Endothelial cell of umbilical vein (primary cell): ENCODE measurements at regions of chr7 and their contacts with region 1.

Region 1: DNA sequence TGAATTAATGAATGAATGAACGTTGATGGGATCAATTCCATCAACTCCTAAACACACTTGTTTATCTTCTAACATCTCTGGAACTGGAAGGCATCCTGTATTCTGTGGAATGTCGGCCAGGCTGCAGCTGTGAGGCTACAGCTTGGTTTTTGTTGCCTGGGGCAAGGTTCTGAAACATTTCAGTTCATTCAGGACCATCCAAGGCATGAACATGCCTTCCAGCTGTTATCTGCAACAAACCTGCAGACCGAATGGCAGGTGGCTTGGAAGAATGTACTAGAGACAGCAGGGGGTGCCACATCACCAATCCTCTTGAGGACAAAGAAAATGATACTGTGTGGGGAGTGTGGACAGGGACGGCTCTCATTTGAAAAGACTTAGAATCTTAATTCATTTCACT is 12.5 kb downstream of the PAPOLB start:
- DNase-seq: peak; percentile 36
- H3K4me3 ChIP-seq: no peak overlapping the region
- H3K27ac ChIP-seq: no peak overlapping the region
- H3K4me1 ChIP-seq: peaks cover 2% of the 10 kb centered on the region
- H3K27me3 ChIP-seq: peaks cover 0 to 3% of the 10 kb centered on the region in 2 experiments
- CTCF ChIP-seq: peak; percentile 23 to 39
- POLR2A ChIP-seq: no peak

Region 2: GRCh38 chr7:4416396-4417056 is 432.8 kb before region 1 on chr7:
- CTCF ChIA-PET with region 1: no interaction called
- POLR2A ChIA-PET with region 1: no interaction called
- dilution Hi-C with region 1: no loop called
- intact Hi-C with region 1: no loop called
- DNase-seq: no peak
- H3K4me3 ChIP-seq: no peak overlapping the region
- H3K27ac ChIP-seq: no peak overlapping the region
- H3K4me1 ChIP-seq: no peaks in the 10 kb centered on the region
- H3K27me3 ChIP-seq: no peaks in the 10 kb centered on the region
- CTCF ChIP-seq: no peak
- POLR2A ChIP-seq: no peak

Region 3: DNA sequence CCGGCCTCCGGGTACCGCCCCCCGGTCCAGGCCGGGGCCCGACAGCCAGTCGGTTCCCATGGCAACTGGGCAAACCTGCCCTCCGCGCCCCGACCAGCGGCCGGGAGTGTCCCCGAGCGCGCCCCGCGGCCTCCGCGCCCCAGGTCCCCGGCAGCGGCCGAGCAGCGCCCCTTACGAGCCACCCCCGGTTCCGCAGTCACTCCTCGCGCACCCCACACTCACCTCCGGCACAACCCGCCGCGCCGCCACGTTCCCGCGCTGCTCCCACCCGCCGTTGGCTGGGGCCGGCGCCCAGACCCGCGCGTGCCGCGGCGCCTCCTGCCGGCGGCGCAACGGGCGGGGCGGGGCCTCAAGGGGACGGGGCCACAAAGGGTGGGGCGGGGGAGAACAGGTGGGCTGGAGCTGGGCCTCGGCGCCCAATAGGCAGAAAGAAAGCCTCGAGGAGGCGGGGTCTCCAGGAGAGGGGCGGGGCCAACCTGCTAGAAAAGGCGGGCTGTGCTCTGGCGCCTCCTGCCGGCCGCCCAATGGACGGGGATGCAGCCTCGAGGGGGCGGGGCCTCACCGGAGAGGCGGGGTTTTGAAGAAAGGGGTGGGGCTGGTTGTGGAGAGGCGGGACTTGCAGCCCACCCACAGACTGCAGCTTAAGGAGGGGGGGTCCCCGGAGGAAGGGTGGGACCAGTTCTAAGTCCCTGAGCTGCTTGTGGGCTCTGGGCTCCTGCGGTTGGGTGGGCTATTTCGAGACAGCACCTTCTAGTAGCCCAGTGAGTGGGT is 34.2 kb after region 1 on chr7 and contains the start of gene RADIL:
- CTCF ChIA-PET with region 1: interaction called, 12 read pairs
- POLR2A ChIA-PET with region 1: no interaction called
- dilution Hi-C with region 1: no loop called
- intact Hi-C with region 1: no loop called
- DNase-seq: peak; percentile 89
- H3K4me3 ChIP-seq: peak within 1 kb of the TSS; percentile 3 to 46 (median 9)
- H3K27ac ChIP-seq: no peak within 1 kb of the TSS
- H3K4me1 ChIP-seq: peaks cover 8% of the 10 kb centered on the region
- H3K27me3 ChIP-seq: no peaks in the 10 kb centered on the region
- CTCF ChIP-seq: peak; percentile 80 to 92
- POLR2A ChIP-seq: no peak
- total RNA-seq, gene RADIL: 1.0 and 2.5 TPM in 2 replicates

Region 4: GRCh38 chr7:5083311-5083711 is 233.9 kb after region 1 on chr7:
- CTCF ChIA-PET with region 1: interaction called, 13 read pairs
- POLR2A ChIA-PET with region 1: no interaction called
- dilution Hi-C with region 1: no loop called
- intact Hi-C with region 1: loop called (anchors 1 kb)
- DNase-seq: no peak
- H3K4me3 ChIP-seq: no peak overlapping the region
- H3K27ac ChIP-seq: no peak overlapping the region
- H3K4me1 ChIP-seq: no peaks in the 10 kb centered on the region
- H3K27me3 ChIP-seq: no peaks in the 10 kb centered on the region
- CTCF ChIP-seq: no peak
- POLR2A ChIP-seq: no peak

Region 5: DNA sequence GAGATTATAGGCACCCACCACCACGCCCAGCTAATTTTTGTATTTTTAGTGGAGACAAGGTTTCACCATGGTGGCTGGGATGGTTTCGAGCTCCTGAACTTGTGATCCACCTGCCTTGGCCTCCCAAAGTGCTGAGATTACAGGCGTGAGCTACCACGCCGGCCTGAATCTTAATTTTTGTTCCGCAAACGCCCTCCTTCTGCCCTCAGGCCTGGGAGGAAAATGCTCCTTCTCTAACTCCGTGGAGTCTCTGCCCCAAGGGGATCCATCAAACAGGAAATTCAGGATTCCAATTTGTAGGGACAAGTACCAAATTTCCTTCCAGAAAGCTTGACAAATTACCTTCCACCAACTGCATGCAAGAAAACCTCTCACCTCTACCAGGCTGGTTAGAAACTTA is 239.5 kb after region 1 on chr7:
- CTCF ChIA-PET with region 1: interaction called, 13 read pairs
- POLR2A ChIA-PET with region 1: no interaction called
- dilution Hi-C with region 1: no loop called
- intact Hi-C with region 1: loop called (anchors 1 kb)
- DNase-seq: no peak
- H3K4me3 ChIP-seq: no peak overlapping the region
- H3K27ac ChIP-seq: no peak overlapping the region
- H3K4me1 ChIP-seq: no peaks in the 10 kb centered on the region
- H3K27me3 ChIP-seq: no peaks in the 10 kb centered on the region
- CTCF ChIP-seq: no peak
- POLR2A ChIP-seq: no peak